ENCODE measurements at regions of chr3 and their contacts with region 1.

Region 1: DNA sequence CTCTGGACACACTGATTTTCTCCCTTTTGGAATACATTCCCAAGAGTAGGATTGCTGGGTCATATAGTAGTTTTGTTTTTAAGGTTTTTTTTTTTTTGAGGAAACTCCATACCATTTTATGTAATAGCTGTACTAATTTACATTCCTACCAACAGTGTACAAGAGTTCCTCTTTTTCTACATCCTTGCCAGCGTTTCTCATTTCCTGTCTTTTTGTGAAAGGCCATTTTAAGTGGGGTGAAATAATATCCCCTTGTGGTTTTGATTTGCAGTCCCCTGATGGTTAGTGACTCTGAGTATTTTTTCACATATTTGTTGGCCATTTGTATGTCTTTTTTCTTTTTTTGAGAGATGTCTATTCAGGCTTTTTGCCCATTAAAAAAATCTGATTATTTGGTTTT is 1205.5 kb downstream of the ROBO1 start:
- DNase-seq: no peak
- H3K4me3 ChIP-seq: no peak overlapping the region
- CTCF ChIP-seq: no peak

Region 2: GRCh38 chr3:78511840-78512239 is 50.5 kb before region 1 on chr3:
- in situ Hi-C with region 1: loop called (anchors 5 kb)
- DNase-seq: no peak
- H3K4me3 ChIP-seq: no peak overlapping the region
- CTCF ChIP-seq: no peak